ENCODE measurements at regions of chr21 and their contacts with region 1.

Region 1: DNA sequence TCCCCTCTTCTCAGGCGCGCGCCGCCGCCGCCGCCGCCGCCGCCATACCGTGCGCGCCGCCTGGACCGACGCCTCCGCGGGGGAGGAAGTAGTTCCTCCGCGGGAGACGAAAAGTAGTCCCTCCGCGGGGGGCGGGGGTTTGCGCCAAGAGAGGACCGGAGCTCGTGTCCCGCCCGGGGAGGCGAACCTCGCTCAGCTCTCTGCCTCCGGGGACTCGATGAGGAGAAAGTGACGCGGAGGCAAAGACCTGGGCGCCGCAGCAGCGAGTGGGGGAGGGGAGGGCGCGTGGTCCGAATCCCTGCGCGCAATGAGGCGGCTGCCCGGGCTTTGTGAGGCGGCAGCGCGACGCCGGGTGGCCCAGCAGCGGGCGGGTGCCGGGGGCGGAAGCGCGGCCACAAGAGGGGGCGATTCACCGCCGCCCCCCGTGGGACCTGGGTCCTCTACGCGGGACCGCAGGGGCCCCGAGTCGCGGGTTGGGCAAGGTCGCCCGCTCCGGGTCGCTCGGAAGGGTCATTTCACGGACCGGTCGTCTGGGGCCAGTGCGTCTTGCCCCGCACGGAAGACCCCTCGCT is at the start of gene BRWD1:
- DNase-seq: peak; percentile 97
- ATAC-seq: peak; percentile 52
- H3K4me3 ChIP-seq: peak within 1 kb of the TSS; percentile 50 to 83 (median 72)
- H3K4me3 Mint-ChIP-seq: peak within 1 kb of the TSS; percentile 95
- H3K27ac ChIP-seq: peak within 1 kb of the TSS; percentile 57 to 84
- H3K27ac Mint-ChIP-seq: peak within 1 kb of the TSS; percentile 90
- H3K4me1 ChIP-seq: peaks cover 11 to 29% of the 10 kb centered on the region in 2 donors
- H3K4me1 Mint-ChIP-seq: peaks cover 43% of the 10 kb centered on the region
- H3K27me3 ChIP-seq: no peaks in the 10 kb centered on the region
- H3K27me3 Mint-ChIP-seq: no peaks in the 10 kb centered on the region
- CTCF ChIP-seq: peak; percentile 55
- total RNA-seq, gene BRWD1: 90.8 and 93.9 TPM in 2 replicates

Region 2: GRCh38 chr21:39153373-39153772 is 160.3 kb before region 1 on chr21:
- CTCF ChIA-PET with region 1: no interaction called
- POLR2A ChIA-PET with region 1: no interaction called
- intact Hi-C with region 1: no loop called
- DNase-seq: no peak
- ATAC-seq: no peak
- H3K4me3 ChIP-seq: no peak overlapping the region
- H3K4me3 Mint-ChIP-seq: no peak overlapping the region
- H3K27ac ChIP-seq: no peak overlapping the region
- H3K27ac Mint-ChIP-seq: no peak overlapping the region
- H3K4me1 ChIP-seq: no peaks in the 10 kb centered on the region
- H3K4me1 Mint-ChIP-seq: no peaks in the 10 kb centered on the region
- H3K27me3 ChIP-seq: peaks cover 0 to 3% (median 0%) of the 10 kb centered on the region in 4 experiments
- H3K27me3 Mint-ChIP-seq: peaks cover 8% of the 10 kb centered on the region
- CTCF ChIP-seq: peak; percentile 27

Region 3: GRCh38 chr21:39379986-39380891 is 66.6 kb after region 1 on chr21:
- CTCF ChIA-PET with region 1: no interaction called
- POLR2A ChIA-PET with region 1: interaction called, 6 read pairs
- intact Hi-C with region 1: loop called (anchors 1 kb)
- DNase-seq: peak; percentile 90
- ATAC-seq: peak; percentile 98
- H3K4me3 ChIP-seq: peak overlapping the region; percentile 73 to 97 (median 92)
- H3K4me3 Mint-ChIP-seq: peak overlapping the region; percentile 93
- H3K27ac ChIP-seq: peak overlapping the region; percentile 61 to 81
- H3K27ac Mint-ChIP-seq: peak overlapping the region; percentile 90
- H3K4me1 ChIP-seq: peaks cover 10 to 16% of the 10 kb centered on the region in 2 donors
- H3K4me1 Mint-ChIP-seq: peaks cover 19% of the 10 kb centered on the region
- H3K27me3 ChIP-seq: peaks cover 0 to 6% (median 0%) of the 10 kb centered on the region in 4 experiments
- H3K27me3 Mint-ChIP-seq: no peaks in the 10 kb centered on the region
- CTCF ChIP-seq: no peak

Region 4: GRCh38 chr21:39388038-39388810 is 74.6 kb after region 1 on chr21:
- CTCF ChIA-PET with region 1: interaction called, 7 read pairs
- POLR2A ChIA-PET with region 1: interaction called, 3 read pairs
- intact Hi-C with region 1: loop called (anchors 1 kb)
- DNase-seq: peak; percentile 88
- ATAC-seq: peak; percentile 84
- H3K4me3 ChIP-seq: peak overlapping the region; percentile 38 to 63 (median 56)
- H3K4me3 Mint-ChIP-seq: peak overlapping the region; percentile 94
- H3K27ac ChIP-seq: peak overlapping the region; percentile 20 to 25
- H3K27ac Mint-ChIP-seq: peak overlapping the region; percentile 89
- H3K4me1 ChIP-seq: peaks cover 11 to 18% of the 10 kb centered on the region in 2 donors
- H3K4me1 Mint-ChIP-seq: peaks cover 24% of the 10 kb centered on the region
- H3K27me3 ChIP-seq: no peaks in the 10 kb centered on the region
- H3K27me3 Mint-ChIP-seq: no peaks in the 10 kb centered on the region
- CTCF ChIP-seq: peak; percentile 97

Region 5: DNA sequence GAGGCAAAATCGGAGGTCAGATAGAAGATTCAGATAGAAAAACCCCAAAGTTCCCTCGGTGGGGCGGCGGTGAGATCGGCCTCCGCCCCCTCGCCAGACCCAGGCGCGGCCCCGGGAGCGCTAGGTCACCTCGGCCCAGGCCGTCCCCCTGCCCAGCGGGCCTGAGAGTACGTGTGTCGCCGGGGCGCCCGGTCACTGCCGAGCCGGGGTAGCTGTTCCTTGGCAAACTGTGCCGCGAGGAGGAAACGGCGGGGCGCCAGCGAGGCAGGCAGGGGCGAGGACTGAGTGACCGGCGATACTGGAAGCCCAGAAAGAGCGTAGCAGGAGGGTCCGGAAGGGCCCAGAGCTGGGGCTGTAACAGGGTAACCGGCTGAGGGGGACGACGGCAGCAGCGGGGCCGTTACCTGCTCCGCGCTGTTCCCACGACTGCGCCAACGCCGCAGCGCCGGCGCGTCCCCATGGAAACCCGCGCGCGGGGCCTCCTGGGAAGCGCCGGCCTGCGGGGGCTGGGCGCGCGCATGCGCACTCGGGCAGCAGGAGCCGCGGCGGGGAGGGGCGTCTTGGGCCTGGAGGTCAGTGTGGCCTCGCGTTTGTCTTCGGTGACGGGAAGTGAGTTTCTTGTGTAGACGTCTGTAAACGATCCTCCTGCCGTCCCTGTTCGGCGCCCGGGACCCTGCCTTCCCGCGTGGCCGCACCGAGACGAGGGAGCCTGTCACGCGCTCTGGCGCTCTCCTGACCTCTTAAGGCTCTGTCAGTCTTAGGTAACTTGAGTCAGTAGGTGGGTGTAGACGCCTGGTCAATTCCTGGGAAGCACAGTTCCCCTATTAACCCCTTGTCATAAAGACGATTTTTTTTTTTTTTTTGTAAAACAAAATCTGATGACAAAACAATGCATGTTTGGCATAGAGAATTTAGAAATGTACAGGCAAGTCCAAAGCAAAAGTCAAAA is 131.9 kb after region 1 on chr21 and contains the start of gene LCA5L:
- CTCF ChIA-PET with region 1: interaction called, 3 read pairs
- POLR2A ChIA-PET with region 1: interaction called, 7 read pairs
- intact Hi-C with region 1: loop called (anchors 1 kb)
- DNase-seq: peak; percentile 95
- ATAC-seq: peak; percentile 88
- H3K4me3 ChIP-seq: peak within 1 kb of the TSS; percentile 16 to 84 (median 81)
- H3K4me3 Mint-ChIP-seq: peak within 1 kb of the TSS; percentile 97
- H3K27ac ChIP-seq: peak within 1 kb of the TSS; percentile 76 to 88
- H3K27ac Mint-ChIP-seq: peak within 1 kb of the TSS; percentile 99
- H3K4me1 ChIP-seq: peaks cover 6 to 13% of the 10 kb centered on the region in 2 donors
- H3K4me1 Mint-ChIP-seq: peaks cover 12% of the 10 kb centered on the region
- H3K27me3 ChIP-seq: peaks cover 0 to 3% (median 0%) of the 10 kb centered on the region in 4 experiments
- H3K27me3 Mint-ChIP-seq: peaks cover 23% of the 10 kb centered on the region
- CTCF ChIP-seq: peak; percentile 26
- total RNA-seq, gene LCA5L: 0.39 and 0.62 TPM in 2 replicates